ENCODE measurements at regions of chr21 and their contacts with region 1.

Region 1: GRCh38 chr21:34129039-34129891 is 55.9 kb downstream of the MRPS6 start:
- DNase-seq: peak; percentile 69
- H3K4me3 ChIP-seq: no peak overlapping the region
- H3K27ac ChIP-seq: peak overlapping the region; percentile 59 to 63
- H3K4me1 ChIP-seq: no peaks in the 10 kb centered on the region
- H3K27me3 ChIP-seq: no peaks in the 10 kb centered on the region
- CTCF ChIP-seq: peak in 2 of 4 experiments; percentile 18 to 28
- POLR2A ChIP-seq: no peak

Region 2: GRCh38 chr21:33924079-33924765 is 205.0 kb before region 1 on chr21:
- intact Hi-C with region 1: loop called (anchors 5 kb)
- DNase-seq: peak; percentile 85
- H3K4me3 ChIP-seq: no peak overlapping the region
- H3K27ac ChIP-seq: no peak overlapping the region
- H3K4me1 ChIP-seq: no peaks in the 10 kb centered on the region
- H3K27me3 ChIP-seq: no peaks in the 10 kb centered on the region
- CTCF ChIP-seq: peak; percentile 80 to 93 (median 92)
- POLR2A ChIP-seq: no peak

Region 3: GRCh38 chr21:34073032-34073869 is 56.0 kb before region 1 on chr21 and contains the starts of genes MRPS6 and SLC5A3:
- intact Hi-C with region 1: loop called (anchors 5 kb)
- DNase-seq: peak; percentile 79
- H3K4me3 ChIP-seq: peak within 1 kb of the TSS; percentile 77 to 80
- H3K27ac ChIP-seq: peak within 1 kb of the TSS; percentile 85 to 89
- H3K4me1 ChIP-seq: peaks cover 10% of the 10 kb centered on the region
- H3K27me3 ChIP-seq: no peaks in the 10 kb centered on the region
- CTCF ChIP-seq: peak in 1 of 4 experiments; percentile 5
- POLR2A ChIP-seq: peak; percentile 88
- total RNA-seq, gene MRPS6: 24.9 to 75.8 TPM
- total RNA-seq, gene SLC5A3: 8.2 to 44.0 TPM

Region 4: GRCh38 chr21:34202553-34203372 is 73.5 kb after region 1 on chr21:
- intact Hi-C with region 1: loop called (anchors 2 kb)
- DNase-seq: no peak
- H3K4me3 ChIP-seq: peak overlapping the region in 1 of 2 donors; percentile 49
- H3K27ac ChIP-seq: peak overlapping the region; percentile 61 to 70
- H3K4me1 ChIP-seq: no peaks in the 10 kb centered on the region
- H3K27me3 ChIP-seq: no peaks in the 10 kb centered on the region
- CTCF ChIP-seq: no peak
- POLR2A ChIP-seq: no peak

Region 5: GRCh38 chr21:34345091-34345871 is 216.0 kb after region 1 on chr21:
- intact Hi-C with region 1: loop called (anchors 5 kb)
- DNase-seq: no peak
- H3K4me3 ChIP-seq: no peak overlapping the region
- H3K27ac ChIP-seq: peak overlapping the region; percentile 56 to 69
- H3K4me1 ChIP-seq: no peaks in the 10 kb centered on the region
- H3K27me3 ChIP-seq: no peaks in the 10 kb centered on the region
- CTCF ChIP-seq: no peak
- POLR2A ChIP-seq: no peak

Region 6: DNA sequence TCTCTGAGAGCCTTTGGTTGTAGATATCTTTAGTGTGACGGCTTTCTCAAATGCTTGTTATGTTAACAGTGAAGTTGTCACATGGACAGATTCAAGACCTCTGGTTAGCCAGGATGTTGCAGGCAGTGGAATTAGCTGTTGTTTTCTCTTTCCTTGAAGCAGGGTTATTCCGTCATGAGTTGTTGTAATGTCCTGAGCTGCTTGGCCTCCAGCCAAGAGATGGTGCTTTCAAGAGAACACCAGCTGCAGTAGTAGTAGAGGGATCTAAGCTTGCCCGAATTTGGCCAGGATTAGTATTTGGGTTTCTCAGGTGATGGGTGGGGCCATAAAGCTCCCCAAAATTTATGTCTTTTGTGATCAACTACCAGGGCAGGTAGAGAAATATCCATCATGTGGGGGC is 369.4 kb after region 1 on chr21:
- intact Hi-C with region 1: no loop called
- DNase-seq: no peak
- H3K4me3 ChIP-seq: no peak overlapping the region
- H3K27ac ChIP-seq: no peak overlapping the region
- H3K4me1 ChIP-seq: no peaks in the 10 kb centered on the region
- H3K27me3 ChIP-seq: no peaks in the 10 kb centered on the region
- CTCF ChIP-seq: no peak
- POLR2A ChIP-seq: no peak